HepG2 (cell line): ENCODE measurements at regions of chr12 and their contacts with region 1.

Region 1: DNA sequence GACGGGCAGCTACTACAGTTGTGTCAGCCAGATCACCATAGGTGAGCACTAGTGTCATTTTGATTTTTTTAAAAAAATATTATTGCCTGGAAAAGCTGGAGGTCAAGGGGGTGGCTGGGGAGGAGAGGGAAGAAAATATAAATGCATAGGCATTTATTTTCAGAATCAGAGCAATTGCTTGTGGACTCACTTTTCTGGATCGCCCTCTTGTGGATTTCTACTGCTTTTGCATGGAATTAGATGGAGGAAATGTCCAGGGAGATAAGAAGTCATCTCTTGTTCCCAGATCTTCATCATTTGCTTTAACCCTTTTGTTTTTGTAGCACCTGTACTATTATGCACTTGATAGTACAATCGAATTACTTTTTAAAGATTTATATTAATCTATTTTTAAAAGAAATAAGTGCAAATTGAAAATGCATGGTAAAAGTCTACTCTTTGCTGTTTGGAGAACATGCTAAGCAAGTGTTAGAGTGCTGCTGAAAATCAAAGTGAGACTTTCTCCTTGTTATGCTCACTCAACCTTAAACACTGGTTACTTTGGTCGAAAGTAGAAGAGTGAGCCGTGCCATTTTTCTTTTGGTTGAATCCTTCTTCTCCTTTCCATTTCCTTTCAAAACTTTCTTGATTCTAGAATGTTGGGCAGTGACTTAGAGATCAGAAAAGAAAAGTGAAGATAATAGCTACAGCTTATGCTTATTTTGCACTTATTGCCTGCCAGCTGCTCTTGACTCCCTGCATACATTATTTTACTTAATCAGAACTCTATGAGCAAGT is 60.6 kb upstream of the ANO4 start:
- DNase-seq: peak; percentile 20
- ATAC-seq: peak; percentile 56
- H3K4me3 ChIP-seq: no peak overlapping the region
- H3K27ac ChIP-seq: no peak overlapping the region
- H3K4me1 ChIP-seq: no peaks in the 10 kb centered on the region
- H3K27me3 ChIP-seq: no peaks in the 10 kb centered on the region
- CTCF ChIP-seq: peak; percentile 56
- EP300 ChIP-seq: no peak
- POLR2A ChIP-seq: no peak
- RAD21 ChIP-seq: no peak

Region 2: DNA sequence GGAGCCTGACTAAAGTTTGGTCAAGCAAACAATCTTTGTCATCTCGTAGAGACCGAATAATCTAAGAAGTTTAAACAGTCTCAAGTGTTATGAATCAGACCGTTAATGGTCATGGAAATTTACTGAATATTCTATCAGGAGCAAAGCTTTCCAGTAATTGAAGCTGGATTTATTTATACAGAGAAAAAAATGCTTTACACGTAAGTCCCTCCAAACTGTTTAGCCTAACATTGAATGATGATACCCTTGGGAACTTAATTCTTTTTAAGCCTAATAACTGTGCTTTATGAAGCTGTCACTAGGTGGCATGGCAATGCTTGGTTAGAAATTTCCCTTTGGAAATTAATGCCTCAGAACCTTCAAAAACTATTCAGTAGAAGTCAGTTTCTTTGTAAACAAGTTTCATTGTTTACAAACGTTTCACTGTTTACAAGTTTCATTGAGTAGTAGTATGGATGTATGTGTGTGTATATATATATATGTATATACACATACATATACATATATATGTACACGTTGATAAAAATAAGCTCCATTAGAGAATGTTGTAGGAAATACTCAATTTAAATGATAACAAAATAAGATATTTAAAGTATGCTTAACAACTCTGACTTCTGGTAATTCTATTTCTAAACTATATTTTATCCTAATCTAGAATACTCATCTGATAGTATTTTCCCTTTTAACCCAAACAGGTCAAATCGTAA is 499.3 kb before region 1 on chr12:
- CTCF ChIA-PET with region 1: no interaction called
- POLR2A ChIA-PET with region 1: no interaction called
- in situ Hi-C with region 1: no loop called
- intact Hi-C with region 1: loop called (anchors 5 kb)
- DNase-seq: peak; percentile 44
- ATAC-seq: peak; percentile 60
- H3K4me3 ChIP-seq: no peak overlapping the region
- H3K27ac ChIP-seq: no peak overlapping the region
- H3K4me1 ChIP-seq: peaks cover 5% of the 10 kb centered on the region
- H3K27me3 ChIP-seq: no peaks in the 10 kb centered on the region
- CTCF ChIP-seq: peak; percentile 69
- EP300 ChIP-seq: no peak
- POLR2A ChIP-seq: no peak
- RAD21 ChIP-seq: peak; percentile 62

Region 3: GRCh38 chr12:100356644-100357223 is 377.3 kb before region 1 on chr12 and contains the start of gene SLC17A8:
- CTCF ChIA-PET with region 1: no interaction called
- POLR2A ChIA-PET with region 1: no interaction called
- in situ Hi-C with region 1: loop called (anchors 10 kb)
- intact Hi-C with region 1: no loop called
- DNase-seq: no peak
- ATAC-seq: peak; percentile 97
- H3K4me3 ChIP-seq: peak within 1 kb of the TSS; percentile 7 to 27 (median 27); a peak in 4 of 6 replicates
- H3K27ac ChIP-seq: no peak within 1 kb of the TSS
- H3K4me1 ChIP-seq: 0 out of 2 replicates have a peak, but pooled peaks cover 11% of the 10 kb centered on the region
- H3K27me3 ChIP-seq: peaks cover 2 to 10% of the 10 kb centered on the region in 2 experiments; a peak in 2 of 5 replicates
- CTCF ChIP-seq: no peak
- EP300 ChIP-seq: no peak
- POLR2A ChIP-seq: no peak
- RAD21 ChIP-seq: no peak
- total RNA-seq, gene SLC17A8: 0.10 and 0.15 TPM in 2 replicates

Region 4: GRCh38 chr12:100554608-100555077 is 179.4 kb before region 1 on chr12:
- CTCF ChIA-PET with region 1: no interaction called
- POLR2A ChIA-PET with region 1: no interaction called
- in situ Hi-C with region 1: no loop called
- intact Hi-C with region 1: loop called (anchors 1 kb)
- DNase-seq: peak; percentile 88
- ATAC-seq: peak; percentile 74
- H3K4me3 ChIP-seq: no peak overlapping the region
- H3K27ac ChIP-seq: peak overlapping the region; percentile 44
- H3K4me1 ChIP-seq: peaks cover 31% of the 10 kb centered on the region
- H3K27me3 ChIP-seq: no peaks in the 10 kb centered on the region; a peak in 1 of 5 replicates
- CTCF ChIP-seq: peak; percentile 82
- EP300 ChIP-seq: no peak
- POLR2A ChIP-seq: no peak
- RAD21 ChIP-seq: peak; percentile 84

Region 5: DNA sequence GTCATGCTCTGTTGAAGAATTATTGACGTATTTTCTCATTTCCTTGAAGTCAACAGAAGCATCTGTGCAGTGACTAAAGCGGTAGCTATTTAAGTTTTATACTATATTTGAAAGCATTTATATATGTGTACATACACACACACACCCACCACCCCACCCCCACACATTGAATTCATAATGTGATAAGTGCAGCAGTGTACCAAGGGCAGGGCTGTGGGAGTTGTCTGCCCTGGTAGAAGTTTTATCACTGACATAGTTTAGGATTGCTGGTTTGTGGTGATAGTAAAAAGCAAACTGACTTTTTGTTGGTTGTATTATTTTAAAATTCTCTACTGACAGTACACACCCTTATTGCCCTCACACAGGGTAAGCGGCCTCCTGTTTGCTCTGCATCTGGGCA is 121.4 kb before region 1 on chr12:
- CTCF ChIA-PET with region 1: no interaction called
- POLR2A ChIA-PET with region 1: no interaction called
- in situ Hi-C with region 1: no loop called
- intact Hi-C with region 1: no loop called
- DNase-seq: no peak
- ATAC-seq: no peak
- H3K4me3 ChIP-seq: no peak overlapping the region
- H3K27ac ChIP-seq: no peak overlapping the region
- H3K4me1 ChIP-seq: no peaks in the 10 kb centered on the region
- H3K27me3 ChIP-seq: no peaks in the 10 kb centered on the region
- CTCF ChIP-seq: no peak
- EP300 ChIP-seq: no peak
- POLR2A ChIP-seq: no peak
- RAD21 ChIP-seq: no peak

Region 6: DNA sequence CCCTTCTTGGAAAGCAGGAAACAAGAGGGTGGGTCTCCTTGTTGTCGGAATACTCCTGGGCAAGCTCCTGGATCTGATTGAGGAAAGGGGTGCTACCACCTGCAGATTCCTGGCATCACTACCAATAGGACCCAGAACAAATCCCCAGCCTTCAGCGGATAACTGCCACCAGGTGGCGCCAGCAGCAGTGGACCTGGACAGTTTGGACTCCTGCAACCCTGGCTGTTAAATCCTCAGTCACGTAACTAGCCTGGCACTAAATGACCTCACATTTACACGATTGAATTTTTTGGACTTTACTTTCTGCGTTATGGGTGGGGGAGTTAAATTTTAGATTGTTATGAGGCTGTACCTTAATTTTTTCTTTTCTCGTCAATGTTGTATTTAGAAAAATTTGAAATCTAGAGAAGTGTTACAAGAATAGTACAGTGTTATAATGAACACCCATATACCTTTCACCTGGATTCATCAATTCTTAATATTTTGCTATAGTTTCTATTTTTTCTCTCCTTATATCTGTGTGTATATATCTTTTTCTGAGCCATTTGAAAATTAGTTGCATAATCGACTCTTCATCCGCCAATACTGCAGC is 65.0 kb before region 1 on chr12:
- CTCF ChIA-PET with region 1: interaction called, 3 read pairs
- POLR2A ChIA-PET with region 1: no interaction called
- in situ Hi-C with region 1: loop called (anchors 5 kb)
- intact Hi-C with region 1: loop called (anchors 1 kb)
- DNase-seq: peak; percentile 66
- ATAC-seq: peak; percentile 88
- H3K4me3 ChIP-seq: no peak overlapping the region
- H3K27ac ChIP-seq: no peak overlapping the region
- H3K4me1 ChIP-seq: peaks cover 11% of the 10 kb centered on the region; the same call in 1 of the 2 replicates
- H3K27me3 ChIP-seq: peaks cover 1 to 4% of the 10 kb centered on the region in 2 experiments; a peak in 3 of 5 replicates
- CTCF ChIP-seq: peak; percentile 86
- EP300 ChIP-seq: no peak
- POLR2A ChIP-seq: no peak
- RAD21 ChIP-seq: peak; percentile 47; the same call in 1 of the 2 replicates

Region 7: DNA sequence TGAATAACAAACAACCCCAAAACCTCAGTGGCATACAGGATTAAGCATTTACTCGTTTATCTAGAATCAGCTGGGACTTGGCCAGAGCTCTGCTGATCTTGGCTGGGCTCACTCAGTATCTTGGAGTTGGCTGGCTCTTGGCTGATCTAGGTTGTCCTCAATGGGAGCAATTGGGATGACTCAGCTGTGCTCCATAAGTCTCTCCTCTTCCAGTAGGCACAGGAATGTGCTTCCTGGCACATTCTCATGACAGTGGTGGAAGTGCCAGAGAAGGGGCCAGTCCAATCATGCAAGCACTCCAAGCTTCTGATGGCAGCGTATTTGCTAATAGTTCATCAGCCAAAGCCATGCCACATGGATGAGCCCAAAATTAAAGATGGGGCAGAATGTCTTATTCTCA is 18.8 kb after region 1 on chr12:
- CTCF ChIA-PET with region 1: no interaction called
- POLR2A ChIA-PET with region 1: no interaction called
- in situ Hi-C with region 1: no loop called
- intact Hi-C with region 1: no loop called
- DNase-seq: no peak
- ATAC-seq: no peak
- H3K4me3 ChIP-seq: no peak overlapping the region
- H3K27ac ChIP-seq: no peak overlapping the region
- H3K4me1 ChIP-seq: no peaks in the 10 kb centered on the region
- H3K27me3 ChIP-seq: peaks cover 0 to 5% of the 10 kb centered on the region in 2 experiments; a peak in 1 of 5 replicates
- CTCF ChIP-seq: no peak
- EP300 ChIP-seq: no peak
- POLR2A ChIP-seq: no peak
- RAD21 ChIP-seq: no peak

Region 8: DNA sequence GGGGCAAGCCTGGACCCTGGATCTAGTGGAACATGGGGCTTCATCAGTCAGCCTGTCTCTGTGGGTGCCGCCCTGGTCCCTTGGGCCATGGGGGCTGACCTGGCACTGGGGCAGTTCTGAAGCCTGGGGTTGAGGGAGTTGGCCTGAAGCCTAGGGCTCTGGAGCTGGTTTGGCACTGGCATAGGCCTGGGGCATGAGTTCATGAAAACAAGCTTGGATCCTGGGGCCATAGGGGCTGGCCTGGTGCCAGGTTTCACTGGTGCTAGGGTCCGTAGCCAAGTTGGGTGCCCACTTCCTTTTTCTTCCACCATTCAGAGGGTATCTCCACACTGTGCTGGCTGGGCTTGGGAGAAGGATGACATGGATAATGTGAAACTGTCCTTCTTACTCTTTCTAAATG is 33.9 kb after region 1 on chr12:
- CTCF ChIA-PET with region 1: no interaction called
- POLR2A ChIA-PET with region 1: no interaction called
- in situ Hi-C with region 1: no loop called
- intact Hi-C with region 1: no loop called
- DNase-seq: no peak
- ATAC-seq: no peak
- H3K4me3 ChIP-seq: no peak overlapping the region
- H3K27ac ChIP-seq: no peak overlapping the region
- H3K4me1 ChIP-seq: no peaks in the 10 kb centered on the region
- H3K27me3 ChIP-seq: no peaks in the 10 kb centered on the region; a peak in 1 of 5 replicates
- CTCF ChIP-seq: no peak
- EP300 ChIP-seq: no peak
- POLR2A ChIP-seq: no peak
- RAD21 ChIP-seq: no peak

Region 9: DNA sequence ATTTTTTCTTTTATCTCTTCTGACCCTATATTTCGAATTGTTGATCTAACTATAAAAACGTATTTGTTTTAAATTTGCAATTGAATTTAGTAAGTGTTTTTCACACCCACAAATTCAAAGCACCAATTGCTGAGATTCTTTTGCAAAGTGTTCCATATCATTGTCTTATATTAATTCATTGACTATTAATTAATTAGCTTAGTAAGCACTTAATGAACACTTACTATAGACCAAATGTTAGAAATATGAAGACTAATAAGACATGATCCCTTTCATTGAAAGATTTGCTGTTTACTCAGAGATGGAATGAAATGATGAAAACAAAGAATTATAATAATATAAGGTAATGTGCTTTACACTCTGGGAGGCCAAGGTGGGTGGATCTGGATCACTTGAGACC is 74.8 kb after region 1 on chr12:
- CTCF ChIA-PET with region 1: no interaction called
- POLR2A ChIA-PET with region 1: no interaction called
- in situ Hi-C with region 1: no loop called
- intact Hi-C with region 1: no loop called
- DNase-seq: no peak
- ATAC-seq: no peak
- H3K4me3 ChIP-seq: no peak overlapping the region
- H3K27ac ChIP-seq: no peak overlapping the region
- H3K4me1 ChIP-seq: no peaks in the 10 kb centered on the region
- H3K27me3 ChIP-seq: no peaks in the 10 kb centered on the region
- CTCF ChIP-seq: no peak
- EP300 ChIP-seq: no peak
- POLR2A ChIP-seq: no peak
- RAD21 ChIP-seq: no peak